Head of caudate nucleus (tissue), 42 donors: ENCODE measurements at regions of chr7 and their contacts with region 1.

Region 1: DNA sequence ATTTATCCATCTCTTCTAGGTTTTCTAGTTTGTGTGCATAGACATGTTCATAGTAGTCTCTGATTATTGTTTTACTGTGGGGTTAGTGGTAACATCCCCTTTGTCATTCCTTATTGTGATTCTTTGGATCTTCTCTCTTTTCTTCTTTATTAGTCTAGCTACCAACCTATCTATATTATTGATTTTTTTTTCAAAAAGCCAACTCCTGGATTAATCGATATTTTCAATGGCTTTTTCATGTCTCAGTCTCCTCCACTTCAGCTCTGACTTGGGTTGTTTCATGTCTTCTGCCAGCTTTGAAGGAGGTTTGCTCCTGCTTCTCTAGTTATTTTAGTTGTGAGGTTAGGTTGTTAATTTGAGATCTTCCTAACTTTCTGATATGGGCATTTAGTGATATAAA is 40.9 kb upstream of the TMEM140 start:
- DNase-seq: no peak

Region 2: GRCh38 chr7:135023622-135024021 is 83.3 kb before region 1 on chr7:
- intact Hi-C with region 1: no loop called
- DNase-seq: no peak

Region 3: DNA sequence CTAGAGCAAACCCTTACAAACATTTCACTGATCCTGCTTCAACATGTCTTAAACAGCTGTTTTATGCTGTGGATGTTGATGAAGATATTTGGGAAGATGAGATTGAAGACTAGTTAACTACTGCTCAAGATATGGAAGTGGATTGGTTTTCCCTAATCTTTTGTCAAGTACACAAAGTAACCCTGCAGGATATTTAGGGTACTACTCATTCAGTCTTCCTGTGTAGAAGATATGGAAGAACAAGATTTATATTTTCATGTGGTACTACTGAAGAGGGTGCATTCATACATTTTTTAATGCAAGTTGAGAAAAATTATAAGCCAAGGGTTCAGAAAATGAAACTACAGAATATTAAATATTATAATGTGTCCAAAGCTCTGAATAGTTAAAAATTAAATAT is 22.6 kb after region 1 on chr7:
- intact Hi-C with region 1: loop called (anchors 2 kb)
- DNase-seq: no peak